ENCODE measurements at regions of chr3 and their contacts with region 1.

Region 1: GRCh38 chr3:57826245-57826951 is 70.3 kb downstream of the SLMAP start:
- DNase-seq: peak in 2 of 3 donors; percentile 12 to 15
- H3K4me3 ChIP-seq: no peak overlapping the region
- H3K27ac ChIP-seq: no peak overlapping the region
- H3K4me1 ChIP-seq: peaks cover 0 to 8% (median 2%) of the 10 kb centered on the region in 4 experiments
- H3K27me3 ChIP-seq: no peaks in the 10 kb centered on the region

Region 2: DNA sequence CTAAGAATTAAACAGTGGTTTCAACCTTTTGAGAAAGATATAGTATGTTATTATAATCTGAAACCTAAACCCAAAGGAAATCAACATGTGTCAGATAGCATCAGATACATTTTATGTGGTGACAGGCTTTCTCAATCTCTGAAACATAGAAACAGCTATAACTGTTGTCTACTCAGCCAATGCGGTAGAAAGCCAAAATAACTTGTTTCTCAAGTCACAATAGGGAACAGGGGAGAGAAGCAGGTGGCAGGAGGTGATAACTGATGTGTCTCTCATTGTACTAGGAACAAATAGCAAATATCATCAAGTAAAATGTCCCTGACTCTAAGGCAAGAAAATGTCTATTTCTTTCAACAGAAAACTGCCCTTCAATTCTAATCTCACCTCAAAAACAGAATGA is 172.1 kb before region 1 on chr3:
- CTCF ChIA-PET with region 1: interaction called, 11 read pairs
- POLR2A ChIA-PET with region 1: no interaction called
- DNase-seq: peak in 2 of 3 donors; percentile 58 to 82
- H3K4me3 ChIP-seq: no peak overlapping the region
- H3K27ac ChIP-seq: no peak overlapping the region
- H3K4me1 ChIP-seq: no peaks in the 10 kb centered on the region
- H3K27me3 ChIP-seq: no peaks in the 10 kb centered on the region

Region 3: DNA sequence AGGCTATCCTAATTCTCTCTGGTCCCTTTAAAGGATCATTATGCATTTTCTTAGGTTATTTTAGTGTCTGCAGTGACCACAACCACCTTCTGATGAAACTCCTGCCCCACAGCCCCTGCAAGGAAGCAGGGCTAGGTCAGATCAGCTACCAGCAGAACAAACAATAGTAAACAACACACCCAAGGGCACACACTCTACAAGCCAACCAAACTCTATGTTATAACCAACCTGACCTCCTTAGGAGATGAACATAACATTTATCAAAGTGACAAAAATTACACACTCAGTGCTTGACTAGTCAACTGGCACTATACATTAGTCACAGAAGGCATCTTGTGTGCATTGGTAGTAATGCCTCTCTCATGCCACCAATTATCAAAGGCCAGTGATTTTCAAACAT is 150.9 kb before region 1 on chr3:
- CTCF ChIA-PET with region 1: interaction called, 11 read pairs
- POLR2A ChIA-PET with region 1: no interaction called
- DNase-seq: no peak
- H3K4me3 ChIP-seq: no peak overlapping the region
- H3K27ac ChIP-seq: no peak overlapping the region
- H3K4me1 ChIP-seq: peaks cover 0 to 25% (median 9%) of the 10 kb centered on the region in 4 experiments
- H3K27me3 ChIP-seq: no peaks in the 10 kb centered on the region

Measured in common myeloid progenitor, CD34-positive (primary cell).